Calu3 (cell line): ENCODE measurements at regions of chr11 and their contacts with region 1.

Region 1: DNA sequence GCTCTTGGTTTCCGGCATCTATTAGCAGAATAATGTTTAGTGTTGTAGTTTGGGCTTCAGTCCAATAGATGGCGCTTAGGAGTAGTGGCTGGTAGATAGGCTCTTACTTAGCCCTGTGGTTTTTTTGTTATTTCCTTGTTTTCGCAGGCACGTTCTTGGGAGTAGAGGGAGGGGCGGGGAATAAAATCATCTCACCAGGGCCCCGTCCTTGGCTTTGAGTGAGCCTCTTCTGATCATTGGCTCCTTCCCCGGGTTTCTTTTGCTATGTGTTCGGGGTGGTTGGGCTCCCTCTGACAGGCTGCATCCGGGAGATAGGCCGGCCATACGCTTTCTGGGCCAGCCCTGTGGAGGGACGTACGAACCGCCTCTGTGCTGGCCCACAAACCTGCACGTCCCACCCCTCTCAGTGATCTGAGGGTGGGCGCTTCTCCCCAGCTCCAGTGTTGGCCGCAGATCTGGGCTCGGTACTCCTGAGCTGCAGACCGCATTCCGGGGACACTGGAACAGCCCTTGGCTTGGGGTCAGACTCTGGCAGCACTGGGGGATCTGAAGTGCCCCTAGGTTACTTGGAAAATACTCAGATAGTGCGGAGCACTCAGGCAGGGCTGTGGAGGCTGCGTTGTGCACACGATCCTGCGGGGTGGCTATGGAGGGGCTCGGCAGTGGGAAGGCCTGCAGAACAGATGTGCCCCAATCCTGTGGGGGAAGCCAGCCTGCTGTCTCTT is 217.0 kb downstream of the DYNC2H1 start:
- DNase-seq: peak; percentile 48
- H3K4me3 Mint-ChIP-seq: peak overlapping the region; percentile 44
- H3K27ac Mint-ChIP-seq: no peak overlapping the region
- H3K4me1 Mint-ChIP-seq: peaks cover 6% of the 10 kb centered on the region
- H3K27me3 Mint-ChIP-seq: no peaks in the 10 kb centered on the region
- CTCF ChIP-seq: peak; percentile 40

Region 2: GRCh38 chr11:102986815-102987214 is 339.4 kb before region 1 on chr11:
- CTCF ChIA-PET with region 1: no interaction called
- intact Hi-C with region 1: no loop called
- DNase-seq: no peak
- H3K4me3 Mint-ChIP-seq: no peak overlapping the region
- H3K27ac Mint-ChIP-seq: no peak overlapping the region
- H3K4me1 Mint-ChIP-seq: no peaks in the 10 kb centered on the region
- H3K27me3 Mint-ChIP-seq: no peaks in the 10 kb centered on the region
- CTCF ChIP-seq: no peak

Region 3: GRCh38 chr11:103537904-103538502 is 211.8 kb after region 1 on chr11:
- CTCF ChIA-PET with region 1: no interaction called
- intact Hi-C with region 1: loop called (anchors 10 kb)
- DNase-seq: peak; percentile 6
- H3K4me3 Mint-ChIP-seq: no peak overlapping the region
- H3K27ac Mint-ChIP-seq: no peak overlapping the region
- H3K4me1 Mint-ChIP-seq: peaks cover 4% of the 10 kb centered on the region
- H3K27me3 Mint-ChIP-seq: no peaks in the 10 kb centered on the region
- CTCF ChIP-seq: no peak